Activated CD4-positive, alpha-beta memory T cell treated with anti-CD3 and anti-CD28 coated beads for 36 hours (primary cell): ENCODE measurements at regions of chr14 and their contacts with region 1.

Region 1: GRCh38 chr14:52961060-52961639 is 10.3 kb upstream of the FERMT2 start:
- DNase-seq: peak; percentile 65
- H3K4me3 Mint-ChIP-seq: no peak overlapping the region
- H3K27ac Mint-ChIP-seq: no peak overlapping the region
- H3K4me1 Mint-ChIP-seq: peaks cover 7% of the 10 kb centered on the region
- H3K27me3 Mint-ChIP-seq: no peaks in the 10 kb centered on the region

Region 2: GRCh38 chr14:52596861-52597260 is 364.3 kb before region 1 on chr14:
- CTCF ChIA-PET with region 1: no interaction called
- POLR2A ChIA-PET with region 1: no interaction called
- intact Hi-C with region 1: no loop called
- DNase-seq: no peak
- H3K4me3 Mint-ChIP-seq: no peak overlapping the region
- H3K27ac Mint-ChIP-seq: no peak overlapping the region
- H3K4me1 Mint-ChIP-seq: no peaks in the 10 kb centered on the region
- H3K27me3 Mint-ChIP-seq: no peaks in the 10 kb centered on the region

Region 3: DNA sequence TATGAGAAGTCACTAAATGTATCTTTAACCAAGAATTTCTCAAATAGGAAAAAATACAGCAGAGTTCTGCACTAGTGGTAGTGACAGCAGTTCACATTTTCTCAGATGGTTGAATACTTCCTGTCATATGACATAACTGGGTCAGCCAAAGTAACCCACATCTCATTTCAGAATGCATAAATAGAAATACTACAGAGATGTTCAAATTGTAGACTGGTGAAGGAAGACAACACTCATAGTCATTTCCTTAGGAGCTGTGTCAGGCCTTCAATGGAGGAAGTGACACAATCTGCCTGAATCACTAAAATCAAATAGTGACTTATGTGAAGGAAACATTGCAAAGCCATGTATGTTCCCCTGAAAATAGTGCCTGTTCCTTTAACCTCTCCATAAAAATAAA is 42.7 kb before region 1 on chr14:
- CTCF ChIA-PET with region 1: interaction called, 10 read pairs
- POLR2A ChIA-PET with region 1: no interaction called
- intact Hi-C with region 1: no loop called
- DNase-seq: peak; percentile 18
- H3K4me3 Mint-ChIP-seq: no peak overlapping the region
- H3K27ac Mint-ChIP-seq: peak overlapping the region; percentile 35
- H3K4me1 Mint-ChIP-seq: peaks cover 25% of the 10 kb centered on the region
- H3K27me3 Mint-ChIP-seq: no peaks in the 10 kb centered on the region

Region 4: DNA sequence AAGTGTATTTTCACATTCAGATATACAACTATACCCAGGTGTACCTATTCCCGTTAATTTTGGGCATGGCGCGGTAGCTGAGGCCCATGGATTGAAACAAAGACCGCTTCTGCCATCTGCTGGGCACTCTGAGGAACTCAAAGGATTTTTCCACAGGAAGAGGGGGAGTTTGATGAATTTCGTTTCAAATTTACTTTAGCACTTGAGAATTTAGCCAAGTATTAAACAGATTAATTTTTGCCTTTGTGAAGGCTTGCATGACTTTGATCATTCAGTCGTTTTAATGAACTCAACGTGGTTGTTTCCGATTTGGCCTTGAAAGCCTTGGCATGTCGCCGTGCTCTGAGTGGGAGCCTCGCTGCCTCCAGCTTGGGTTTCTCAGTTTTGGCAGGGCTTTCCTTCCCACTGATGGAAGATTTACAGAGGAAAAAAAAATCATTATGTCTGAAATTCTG is 345.1 kb after region 1 on chr14:
- CTCF ChIA-PET with region 1: interaction called, 9 read pairs
- POLR2A ChIA-PET with region 1: no interaction called
- intact Hi-C with region 1: loop called (anchors 5 kb)
- DNase-seq: peak; percentile 58
- H3K4me3 Mint-ChIP-seq: peak overlapping the region; percentile 55
- H3K27ac Mint-ChIP-seq: peak overlapping the region; percentile 40
- H3K4me1 Mint-ChIP-seq: peaks cover 6% of the 10 kb centered on the region
- H3K27me3 Mint-ChIP-seq: peaks cover 1% of the 10 kb centered on the region